GM10248 (cell line): ENCODE measurements at regions of chr9 and their contacts with region 1.

Region 1: DNA sequence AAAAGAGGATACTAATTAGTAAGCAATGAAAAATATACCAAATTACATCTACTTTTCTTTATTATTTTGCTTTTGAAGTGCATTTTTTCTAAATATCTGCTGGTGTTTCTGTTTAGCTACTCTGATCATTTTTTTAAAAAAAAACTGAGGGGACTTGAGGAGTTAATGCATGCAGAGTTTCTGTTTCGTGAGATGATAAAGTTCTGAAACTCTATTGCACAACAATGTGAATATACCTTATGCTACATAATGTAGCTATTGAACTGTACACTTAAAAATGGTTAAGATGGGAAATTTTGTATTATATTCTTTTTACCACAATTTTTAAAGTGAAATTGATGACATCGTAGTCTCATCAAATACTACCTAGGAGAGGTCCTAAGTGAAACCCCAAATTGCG is 288.3 kb upstream of the NR4A3 start:
- DNase-seq: no peak
- CTCF ChIP-seq: no peak

Region 2: GRCh38 chr9:99544526-99544925 is 11.1 kb after region 1 on chr9:
- CTCF ChIA-PET with region 1: interaction called, 13 read pairs
- POLR2A ChIA-PET with region 1: no interaction called
- DNase-seq: no peak
- CTCF ChIP-seq: no peak